Esophagus muscularis mucosa (tissue), 4 donors: ENCODE measurements at regions of chr12 and their contacts with region 1.

Region 1: GRCh38 chr12:58346032-58346632 is 404.8 kb downstream of the ATP23 start:
- DNase-seq: no peak
- H3K4me3 ChIP-seq: no peak overlapping the region
- H3K27ac ChIP-seq: no peak overlapping the region
- H3K4me1 ChIP-seq: peaks cover 0 to 8% (median 5%) of the 10 kb centered on the region in 4 donors
- H3K27me3 ChIP-seq: no peaks in the 10 kb centered on the region
- CTCF ChIP-seq: peak; percentile 82 to 86 (median 84)
- EP300 ChIP-seq: no peak
- POLR2A ChIP-seq: no peak

Region 2: DNA sequence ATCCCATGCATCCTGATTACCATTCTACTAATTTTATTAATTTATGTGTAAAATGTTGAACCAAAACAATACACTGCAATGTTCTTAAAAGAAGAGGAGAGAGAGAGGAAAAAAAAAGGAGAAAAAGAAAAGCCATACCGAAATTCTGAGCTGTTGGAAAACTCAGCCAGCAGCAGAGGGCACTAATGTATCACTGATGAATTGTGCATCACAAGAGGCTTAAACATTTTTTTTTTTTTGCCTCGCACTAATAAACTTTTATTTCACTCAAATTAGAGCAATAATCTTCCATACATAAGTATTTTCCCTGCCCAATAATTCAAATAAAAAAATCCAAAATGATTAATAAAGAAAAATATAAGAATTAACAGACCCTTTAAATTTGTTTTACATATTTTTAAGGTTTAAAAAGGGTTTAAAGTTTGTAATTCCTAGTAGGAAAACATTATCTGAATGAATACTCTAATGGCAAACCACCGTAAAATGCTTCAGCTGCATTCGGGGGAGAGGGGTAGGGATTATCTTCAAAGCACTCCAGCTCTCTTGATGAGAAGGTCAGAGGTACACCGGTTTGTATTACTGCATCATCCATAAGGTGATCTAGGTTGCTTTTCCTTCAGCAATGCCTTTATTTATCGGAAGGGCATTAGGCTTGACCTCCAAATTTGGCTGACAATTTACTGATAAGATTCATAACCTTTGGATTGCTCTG is 362.8 kb before region 1 on chr12:
- intact Hi-C with region 1: loop called (anchors 10 kb)
- DNase-seq: no peak
- H3K4me3 ChIP-seq: no peak overlapping the region
- H3K27ac ChIP-seq: no peak overlapping the region
- H3K4me1 ChIP-seq: peaks cover 7 to 22% (median 15%) of the 10 kb centered on the region in 4 donors
- H3K27me3 ChIP-seq: no peaks in the 10 kb centered on the region
- CTCF ChIP-seq: peak; percentile 57 to 70 (median 70)
- EP300 ChIP-seq: no peak
- POLR2A ChIP-seq: no peak

Region 3: GRCh38 chr12:58529897-58530741 is 184.0 kb after region 1 on chr12:
- intact Hi-C with region 1: loop called (anchors 10 kb)
- DNase-seq: no peak
- H3K4me3 ChIP-seq: no peak overlapping the region
- H3K27ac ChIP-seq: peak overlapping the region; percentile 0 to 52 (median 20)
- H3K4me1 ChIP-seq: peaks cover 0 to 25% (median 21%) of the 10 kb centered on the region in 4 donors
- H3K27me3 ChIP-seq: no peaks in the 10 kb centered on the region
- CTCF ChIP-seq: no peak
- EP300 ChIP-seq: no peak
- POLR2A ChIP-seq: no peak

Region 4: DNA sequence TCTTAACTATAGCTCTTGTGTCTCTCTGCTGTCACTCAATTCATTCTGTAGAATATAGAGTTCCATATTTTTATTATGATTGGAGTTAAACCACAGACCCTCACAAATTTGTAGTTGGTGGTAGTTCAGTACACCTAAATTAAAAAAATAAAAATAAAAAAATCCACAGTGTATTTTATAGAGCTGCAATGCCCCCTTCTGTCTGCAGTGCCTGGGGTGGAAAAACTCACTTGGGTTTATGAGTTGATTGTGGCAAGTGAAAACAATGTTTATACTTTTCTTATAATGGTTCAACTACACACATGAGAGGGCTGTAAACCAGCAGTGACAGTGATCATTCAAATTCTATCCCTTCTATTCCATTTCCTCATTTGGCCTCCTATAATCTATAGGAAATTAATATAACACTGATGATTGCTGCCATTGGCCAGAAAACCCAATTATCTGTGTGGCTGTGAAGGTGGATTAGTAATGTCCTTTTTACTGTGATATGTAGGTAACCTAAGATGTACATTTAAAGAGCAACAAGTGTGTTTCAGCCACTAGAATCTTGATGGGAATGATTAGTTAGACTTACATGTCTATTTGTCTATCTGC is 741.0 kb after region 1 on chr12:
- intact Hi-C with region 1: loop called (anchors 10 kb)
- DNase-seq: no peak
- H3K4me3 ChIP-seq: no peak overlapping the region
- H3K27ac ChIP-seq: no peak overlapping the region
- H3K4me1 ChIP-seq: peaks cover 0 to 44% (median 41%) of the 10 kb centered on the region in 4 donors
- H3K27me3 ChIP-seq: no peaks in the 10 kb centered on the region
- CTCF ChIP-seq: peak; percentile 54 to 71 (median 59)
- EP300 ChIP-seq: no peak
- POLR2A ChIP-seq: no peak

Region 5: DNA sequence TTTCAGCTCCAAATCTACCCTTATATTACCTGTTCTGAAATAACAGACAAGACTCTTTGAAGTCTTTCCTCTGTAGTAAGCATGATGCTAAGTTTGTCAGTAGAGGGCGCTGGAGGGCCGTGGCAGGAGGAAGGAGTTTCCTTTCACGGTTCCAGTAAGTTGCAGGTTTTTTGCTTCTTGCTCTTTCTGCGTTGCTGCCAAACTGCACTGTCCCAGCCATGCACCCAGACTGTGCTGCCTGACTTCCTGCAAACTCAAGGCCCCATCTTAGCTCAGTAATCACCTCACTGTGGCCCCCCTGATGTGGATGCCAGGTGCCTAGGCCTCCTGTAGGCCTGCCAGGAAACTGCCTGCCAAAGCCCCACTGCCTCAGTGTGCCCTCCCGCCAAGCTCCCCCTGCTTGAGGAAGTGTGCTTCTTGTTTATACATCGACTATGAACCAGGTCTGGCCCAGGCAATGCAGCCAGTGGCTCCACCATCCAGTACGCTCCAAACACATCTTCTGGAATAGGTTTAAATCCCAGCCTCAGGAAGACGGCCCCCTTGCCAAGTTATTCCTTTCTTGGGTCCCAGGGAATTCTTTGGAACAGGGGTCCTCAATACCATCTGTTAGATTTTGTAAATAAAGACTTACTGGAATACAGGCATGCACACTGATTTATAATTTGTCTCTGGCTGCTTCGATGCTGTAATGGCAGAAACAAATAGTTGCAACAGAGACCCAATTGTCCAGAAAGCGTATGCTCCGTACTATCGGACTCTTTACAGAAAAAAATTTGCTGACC is 767.9 kb after region 1 on chr12:
- intact Hi-C with region 1: no loop called
- DNase-seq: no peak
- H3K4me3 ChIP-seq: no peak overlapping the region
- H3K27ac ChIP-seq: peak overlapping the region in 1 of 4 donors; percentile 16
- H3K4me1 ChIP-seq: peaks cover 3 to 8% (median 6%) of the 10 kb centered on the region in 4 donors
- H3K27me3 ChIP-seq: no peaks in the 10 kb centered on the region
- CTCF ChIP-seq: peak; percentile 77 to 92 (median 85)
- EP300 ChIP-seq: no peak
- POLR2A ChIP-seq: no peak

Region 6: DNA sequence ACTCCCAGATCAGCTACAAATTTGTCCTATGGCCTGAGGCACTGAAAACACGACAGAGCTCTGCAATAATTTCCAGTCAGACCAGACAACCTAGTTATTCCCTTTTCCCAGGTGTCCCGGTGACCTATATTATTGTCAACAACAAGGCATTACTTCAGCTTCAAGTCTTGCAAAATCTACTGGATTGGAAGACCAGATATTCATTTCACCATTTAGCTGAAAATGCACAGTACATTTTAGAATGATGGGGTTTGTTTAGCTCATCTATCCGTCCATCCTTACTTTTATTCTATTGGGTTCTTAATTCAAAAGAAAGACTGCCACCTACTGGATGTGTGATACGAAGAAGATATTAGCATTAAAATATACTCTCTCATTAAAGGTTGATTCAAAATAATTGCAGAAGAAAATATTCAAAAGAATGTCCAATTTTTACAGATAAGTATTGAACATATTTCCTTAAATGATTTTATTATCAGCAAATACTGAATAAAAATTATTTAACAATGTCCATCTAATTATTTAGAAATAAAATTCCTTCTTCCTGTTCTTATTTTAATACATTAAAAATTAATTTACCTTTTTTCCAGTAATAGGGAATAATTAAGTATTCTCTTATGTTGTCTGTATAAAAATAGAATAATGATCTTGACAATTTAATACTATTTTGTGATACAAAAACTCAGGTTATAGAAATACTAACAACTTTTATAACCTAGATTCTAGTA is 819.0 kb after region 1 on chr12:
- intact Hi-C with region 1: loop called (anchors 10 kb)
- DNase-seq: no peak
- H3K4me3 ChIP-seq: no peak overlapping the region
- H3K27ac ChIP-seq: no peak overlapping the region
- H3K4me1 ChIP-seq: no peaks in the 10 kb centered on the region
- H3K27me3 ChIP-seq: no peaks in the 10 kb centered on the region
- CTCF ChIP-seq: peak; percentile 39 to 55 (median 53)
- EP300 ChIP-seq: no peak
- POLR2A ChIP-seq: no peak